ENCODE measurements at regions of chr12 and their contacts with region 1.

Region 1: DNA sequence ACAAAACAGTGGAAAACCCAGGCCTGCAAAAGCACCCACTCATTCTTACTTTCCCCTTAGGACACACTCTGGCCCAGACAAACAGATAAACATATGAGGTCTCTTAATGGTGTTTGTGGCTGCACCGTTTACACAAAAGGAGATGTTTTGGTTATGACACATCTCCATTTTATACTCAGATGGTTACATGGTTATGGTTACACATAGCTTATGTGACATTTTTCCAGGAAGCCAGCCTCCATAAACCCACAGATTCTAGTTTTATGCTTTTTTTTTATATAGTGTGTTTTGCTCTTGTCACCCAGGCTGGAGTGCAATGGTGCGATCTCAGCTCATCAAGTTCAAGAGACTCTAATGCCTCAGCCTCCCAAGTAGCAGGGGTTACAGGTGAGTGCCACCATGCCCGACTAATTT is 3.5 kb upstream of the KLRD1 start:
- DNase-seq: peak; percentile 76
- H3K4me3 ChIP-seq: no peak overlapping the region
- H3K27ac ChIP-seq: no peak overlapping the region
- H3K4me1 ChIP-seq: no peaks in the 10 kb centered on the region
- H3K27me3 ChIP-seq: peaks cover 2% of the 10 kb centered on the region
- CTCF ChIP-seq: no peak

Region 2: DNA sequence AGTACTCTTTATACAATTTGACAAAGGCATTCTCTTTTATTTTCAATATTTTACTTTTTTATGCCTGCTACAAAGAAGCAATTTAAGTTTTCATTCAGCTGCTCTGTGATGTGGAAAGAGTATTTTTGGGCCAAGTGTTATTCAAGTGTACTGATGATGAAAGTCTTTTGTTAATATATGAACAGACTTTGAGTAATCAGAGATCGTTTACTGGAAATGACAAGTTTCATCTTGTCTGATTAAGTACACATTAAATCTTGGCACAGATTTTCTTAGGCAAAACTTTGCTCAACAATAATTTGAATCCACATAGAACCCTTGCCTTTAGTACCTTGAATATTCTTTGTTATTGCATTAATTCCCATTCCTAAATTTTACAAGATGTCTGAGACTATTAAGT is 1082.7 kb before region 1 on chr12:
- CTCF ChIA-PET with region 1: no interaction called
- dilution Hi-C with region 1: no loop called
- in situ Hi-C with region 1: no loop called
- intact Hi-C with region 1: no loop called
- DNase-seq: peak; percentile 79
- H3K4me3 ChIP-seq: no peak overlapping the region
- H3K27ac ChIP-seq: no peak overlapping the region
- H3K4me1 ChIP-seq: peaks cover 9% of the 10 kb centered on the region
- H3K27me3 ChIP-seq: no peaks in the 10 kb centered on the region
- CTCF ChIP-seq: no peak

Region 3: GRCh38 chr12:10256064-10256463 is 48.1 kb before region 1 on chr12:
- CTCF ChIA-PET with region 1: no interaction called
- dilution Hi-C with region 1: no loop called
- in situ Hi-C with region 1: no loop called
- intact Hi-C with region 1: loop called (anchors 5 kb)
- DNase-seq: no peak
- H3K4me3 ChIP-seq: no peak overlapping the region
- H3K27ac ChIP-seq: no peak overlapping the region
- H3K4me1 ChIP-seq: no peaks in the 10 kb centered on the region
- H3K27me3 ChIP-seq: no peaks in the 10 kb centered on the region
- CTCF ChIP-seq: no peak